ENCODE measurements at regions of chrX and their contacts with region 1.

Region 1: GRCh38 chrX:10119399-10119990 is 37.3 kb upstream of the CLCN4 start:
- DNase-seq: no peak

Region 2: DNA sequence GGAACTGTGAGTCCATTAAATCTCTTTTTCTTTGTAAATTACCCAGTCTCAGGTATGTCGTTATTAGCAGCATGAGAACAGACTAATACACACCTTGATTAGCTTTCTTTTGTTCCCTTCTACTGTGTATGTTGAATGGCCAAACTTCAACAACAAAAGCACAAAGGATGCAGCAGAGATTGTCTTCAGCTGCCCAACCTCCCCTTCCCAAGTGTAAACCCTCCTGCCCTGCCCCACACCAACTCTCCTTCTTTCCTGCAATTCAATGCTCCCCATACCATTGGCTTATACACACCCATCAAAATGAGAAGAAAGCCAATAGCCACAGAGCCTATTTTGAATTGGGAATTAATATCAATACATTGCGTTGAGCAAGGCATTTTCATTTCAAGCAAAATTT is 1415.3 kb before region 1 on chrX:
- intact Hi-C with region 1: no loop called
- DNase-seq: no peak

Region 3: GRCh38 chrX:9995855-9996339 is 123.6 kb before region 1 on chrX:
- intact Hi-C with region 1: loop called (anchors 1 to 5 kb)
- DNase-seq: peak; percentile 96

Region 4: GRCh38 chrX:10014462-10015356 is 104.8 kb before region 1 on chrX:
- intact Hi-C with region 1: loop called (anchors 5 kb)
- DNase-seq: peak; percentile 96

Region 5: DNA sequence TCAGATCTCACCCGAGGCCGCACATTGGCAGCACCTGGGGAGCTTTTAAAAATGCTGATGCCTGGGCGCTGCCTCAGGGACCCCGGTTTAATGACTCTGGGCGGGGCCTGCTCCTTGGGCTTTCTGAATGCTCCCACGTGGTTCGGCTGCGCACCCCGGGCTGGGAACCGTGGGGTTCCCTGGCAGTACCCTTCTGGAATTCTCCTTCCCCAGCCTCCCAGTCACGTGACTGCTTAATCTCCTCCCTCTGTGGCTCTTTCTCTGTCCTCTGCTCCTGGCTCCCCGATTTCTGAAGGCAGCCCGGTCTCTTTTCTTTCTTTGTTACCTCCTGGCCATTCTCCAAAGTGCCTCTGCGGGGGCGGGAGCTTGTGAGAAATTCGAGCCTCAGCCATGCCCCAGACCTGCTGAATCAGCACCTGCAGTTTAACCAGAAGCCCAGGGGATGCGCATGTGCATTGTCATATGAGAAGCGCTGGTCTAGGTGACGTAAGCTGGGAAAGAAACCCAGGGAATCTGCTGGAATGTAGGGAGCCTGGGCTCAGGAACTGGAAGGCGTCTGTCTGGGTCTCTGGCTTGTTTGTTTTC is 53.9 kb after region 1 on chrX:
- intact Hi-C with region 1: no loop called
- DNase-seq: peak; percentile 81

Region 6: GRCh38 chrX:10393899-10394298 is 274.4 kb after region 1 on chrX:
- intact Hi-C with region 1: no loop called
- DNase-seq: no peak

Measured in posterior vena cava (tissue), 2 donors.